ENCODE measurements at regions of chr20 and their contacts with region 1.

Region 1: DNA sequence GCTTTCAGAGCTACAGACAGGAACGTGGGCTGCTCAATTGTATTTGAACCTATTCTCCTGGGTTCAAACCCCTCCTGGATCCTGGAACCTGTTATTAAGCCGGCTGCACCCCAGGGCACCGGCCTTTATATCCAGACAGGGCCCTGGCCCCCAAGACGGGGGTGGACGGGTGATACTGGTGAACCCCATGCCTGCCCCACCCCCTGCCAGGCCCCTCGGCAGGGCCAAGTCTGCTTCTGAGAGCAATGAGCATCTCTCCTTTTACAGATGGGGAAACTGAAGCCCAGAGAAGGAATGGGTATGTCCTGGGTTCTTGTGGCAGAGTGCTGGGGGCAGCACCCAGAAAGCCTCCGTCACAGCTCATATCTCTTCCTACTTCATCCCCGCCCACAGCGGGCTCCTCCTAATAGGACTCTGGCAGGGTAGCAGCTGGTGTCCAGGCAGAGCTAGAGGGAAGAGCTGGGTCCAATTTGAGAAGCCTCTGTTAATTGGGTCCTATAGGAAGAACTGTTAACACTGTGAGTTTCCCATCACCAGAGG is 106.3 kb downstream of the CEBPB start:
- DNase-seq: no peak
- H3K4me3 Mint-ChIP-seq: no peak overlapping the region
- H3K27ac Mint-ChIP-seq: no peak overlapping the region
- H3K4me1 Mint-ChIP-seq: peaks cover 31% of the 10 kb centered on the region
- H3K27me3 Mint-ChIP-seq: peaks cover 7% of the 10 kb centered on the region

Region 2: GRCh38 chr20:50286609-50287008 is 10.3 kb before region 1 on chr20:
- intact Hi-C with region 1: loop called (anchors 1 kb)
- DNase-seq: no peak
- H3K4me3 Mint-ChIP-seq: no peak overlapping the region
- H3K27ac Mint-ChIP-seq: peak overlapping the region; percentile 93
- H3K4me1 Mint-ChIP-seq: peaks cover 29% of the 10 kb centered on the region
- H3K27me3 Mint-ChIP-seq: peaks cover 3% of the 10 kb centered on the region

Region 3: GRCh38 chr20:51385646-51386530 is 1089.0 kb after region 1 on chr20:
- intact Hi-C with region 1: no loop called
- DNase-seq: peak; percentile 77
- H3K4me3 Mint-ChIP-seq: no peak overlapping the region
- H3K27ac Mint-ChIP-seq: peak overlapping the region; percentile 81
- H3K4me1 Mint-ChIP-seq: peaks cover 67% of the 10 kb centered on the region
- H3K27me3 Mint-ChIP-seq: no peaks in the 10 kb centered on the region